ENCODE measurements at regions of chr12 and their contacts with region 1.

Region 1: DNA sequence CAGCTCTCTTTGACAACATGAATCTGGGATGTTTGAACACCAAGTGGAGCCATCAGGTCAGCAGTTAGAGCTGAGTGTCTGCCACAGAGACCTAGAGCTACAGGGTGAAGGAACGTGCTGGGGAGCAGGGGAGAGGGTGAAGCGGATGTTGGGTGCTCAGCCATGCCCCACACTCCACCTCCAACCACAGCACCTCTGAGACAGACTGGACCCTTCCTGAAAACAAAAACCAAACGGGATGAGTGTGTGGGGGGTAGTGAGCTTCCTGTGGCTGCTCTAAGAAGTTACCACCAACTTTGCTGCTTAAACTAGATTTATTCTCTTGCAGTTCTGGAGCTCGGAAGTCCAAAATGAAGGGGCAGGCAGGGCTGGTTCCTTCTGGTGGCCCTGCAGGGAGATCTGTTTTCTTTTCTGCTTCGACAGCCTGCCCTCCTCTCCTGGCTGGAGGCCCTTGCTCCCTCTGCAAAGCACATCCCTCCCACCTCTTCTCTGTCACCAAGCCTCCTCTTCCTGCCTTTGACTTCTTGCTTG is 5.6 kb upstream of the GOLGA3 start:
- DNase-seq: no peak
- ATAC-seq: no peak
- H3K4me3 ChIP-seq: no peak overlapping the region
- H3K27ac ChIP-seq: no peak overlapping the region
- H3K4me1 ChIP-seq: peaks cover 1% of the 10 kb centered on the region
- H3K27me3 ChIP-seq: no peaks in the 10 kb centered on the region
- CTCF ChIP-seq: no peak

Region 2: DNA sequence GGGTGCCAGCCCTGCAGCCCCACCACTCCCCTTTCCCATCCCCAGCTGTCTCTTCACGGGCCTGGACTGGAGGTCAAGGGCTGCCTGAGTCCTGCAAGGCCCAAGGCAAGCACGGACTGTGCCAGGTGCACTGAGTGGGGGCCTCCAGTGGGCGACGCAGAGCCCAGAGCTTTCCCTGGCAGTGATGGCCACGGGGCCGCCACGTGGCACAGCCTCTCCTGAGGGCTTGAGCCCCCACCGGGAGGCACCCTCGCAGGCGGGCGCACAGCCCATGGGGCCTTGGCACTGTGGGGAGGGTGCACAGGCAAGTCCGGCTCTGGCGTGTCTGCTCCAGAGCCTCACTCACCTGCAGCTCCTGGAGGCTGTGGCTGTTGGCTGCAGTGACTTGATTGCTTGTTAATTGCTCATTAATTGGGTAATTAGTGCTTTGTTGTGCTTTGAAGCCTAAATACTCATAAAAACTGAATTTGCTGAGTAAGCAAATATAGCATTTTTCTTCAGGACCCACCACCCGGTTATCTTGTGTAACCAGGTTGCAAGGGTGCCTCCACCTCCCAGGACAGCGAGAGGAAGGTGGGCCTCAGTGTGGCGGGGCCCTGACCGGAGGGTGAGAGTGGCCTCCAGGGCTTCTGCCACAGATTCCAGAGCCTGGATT is 295.8 kb before region 1 on chr12:
- CTCF ChIA-PET with region 1: no interaction called
- POLR2A ChIA-PET with region 1: no interaction called
- intact Hi-C with region 1: no loop called
- DNase-seq: no peak
- ATAC-seq: peak; percentile 25; the same call in 1 of the 2 replicates
- H3K4me3 ChIP-seq: no peak overlapping the region
- H3K27ac ChIP-seq: no peak overlapping the region
- H3K4me1 ChIP-seq: no peaks in the 10 kb centered on the region
- H3K27me3 ChIP-seq: no peaks in the 10 kb centered on the region
- CTCF ChIP-seq: no peak

Region 3: DNA sequence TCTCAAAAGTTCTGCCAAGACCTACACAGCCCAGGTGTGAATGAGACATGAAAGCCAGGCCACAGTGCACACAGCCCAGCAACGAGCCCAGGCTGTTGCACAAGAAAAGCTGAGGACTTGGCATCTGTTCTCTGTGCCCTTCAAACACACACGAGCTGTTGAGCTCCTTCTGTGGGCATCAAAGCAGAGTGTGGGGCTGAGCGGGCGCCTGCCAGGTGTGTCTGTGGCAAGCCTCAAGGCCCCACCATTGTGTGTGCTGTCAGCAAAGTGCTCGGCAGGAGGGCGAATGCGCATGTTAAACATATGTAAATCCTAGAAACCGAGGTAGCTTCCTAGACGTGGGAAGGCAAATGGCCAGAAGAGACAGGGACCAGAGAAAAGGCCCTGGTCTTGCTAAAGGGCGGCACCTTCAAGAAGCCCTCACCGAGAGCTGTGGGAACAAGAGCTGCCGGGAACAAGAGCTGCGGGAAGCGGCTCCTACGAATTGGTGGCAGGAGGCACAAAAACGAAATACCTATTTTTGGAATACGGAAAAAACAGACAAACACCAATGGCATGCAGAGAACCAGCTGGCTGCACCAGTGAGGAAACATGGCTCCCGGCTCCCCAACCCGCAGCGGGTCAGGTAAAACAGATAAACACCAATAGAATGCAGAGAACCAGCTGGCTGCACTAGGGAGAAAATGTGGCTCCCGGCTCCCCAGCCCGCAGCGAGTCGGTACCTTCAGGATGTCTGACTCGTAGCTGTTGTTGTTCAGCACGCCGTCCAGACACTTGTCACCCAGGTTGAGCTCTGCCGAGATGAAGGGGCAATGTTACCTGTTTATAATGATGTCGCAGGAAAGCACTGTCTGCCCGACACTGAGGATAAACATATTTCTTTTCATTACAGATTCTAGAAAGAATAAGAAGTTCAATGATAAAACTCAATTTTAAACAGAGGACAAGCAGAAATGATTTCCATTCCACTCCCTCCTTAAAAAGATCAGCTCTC is 13.4 kb after region 1 on chr12:
- CTCF ChIA-PET with region 1: no interaction called
- POLR2A ChIA-PET with region 1: interaction called, 20 read pairs
- intact Hi-C with region 1: no loop called
- DNase-seq: no peak
- ATAC-seq: no peak
- H3K4me3 ChIP-seq: no peak overlapping the region
- H3K27ac ChIP-seq: no peak overlapping the region
- H3K4me1 ChIP-seq: no peaks in the 10 kb centered on the region
- H3K27me3 ChIP-seq: no peaks in the 10 kb centered on the region
- CTCF ChIP-seq: no peak

Measured in PC-3 (cell line).